H1 (cell line): ENCODE measurements at regions of chr9 and their contacts with region 1.

Region 1: DNA sequence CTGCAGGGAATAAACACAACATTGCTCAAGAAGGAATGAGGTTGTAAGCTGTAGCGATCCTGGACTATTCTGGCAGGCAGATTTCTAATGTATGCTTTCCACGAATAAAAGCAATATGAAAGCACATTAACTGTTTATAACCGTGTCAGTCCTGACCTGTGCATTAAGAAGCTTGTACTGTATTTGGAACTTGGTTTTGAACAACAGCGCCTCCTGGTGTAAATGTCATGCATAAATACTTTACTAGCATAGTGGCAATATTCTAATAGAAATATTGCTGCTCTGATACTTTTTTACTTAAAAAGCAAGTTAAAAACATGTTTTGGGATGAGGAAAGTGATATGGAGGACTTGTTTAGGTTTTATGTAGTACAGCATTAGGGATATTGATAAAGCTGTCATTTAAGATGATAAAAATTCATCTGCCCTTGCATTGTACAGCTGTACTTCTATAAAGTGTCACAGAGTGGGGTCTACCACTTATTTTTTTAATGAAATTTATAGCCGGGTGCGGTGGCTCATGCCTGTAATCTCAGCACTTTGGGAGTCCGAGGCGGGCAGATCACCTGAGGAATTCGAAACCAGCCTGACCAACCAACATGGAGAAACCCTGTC is 70.7 kb upstream of the GNE start:
- DNase-seq: no peak
- H3K4me3 ChIP-seq: no peak overlapping the region
- H3K27ac ChIP-seq: no peak overlapping the region
- H3K4me1 ChIP-seq: no peaks in the 10 kb centered on the region
- H3K27me3 ChIP-seq: no peaks in the 10 kb centered on the region
- CTCF ChIP-seq: peak in 2 of 3 experiments; percentile 51 to 68; a peak in 3 of 4 replicates
- EP300 ChIP-seq: no peak
- POLR2A ChIP-seq: no peak
- RAD21 ChIP-seq: peak; percentile 75 to 78

Region 2: DNA sequence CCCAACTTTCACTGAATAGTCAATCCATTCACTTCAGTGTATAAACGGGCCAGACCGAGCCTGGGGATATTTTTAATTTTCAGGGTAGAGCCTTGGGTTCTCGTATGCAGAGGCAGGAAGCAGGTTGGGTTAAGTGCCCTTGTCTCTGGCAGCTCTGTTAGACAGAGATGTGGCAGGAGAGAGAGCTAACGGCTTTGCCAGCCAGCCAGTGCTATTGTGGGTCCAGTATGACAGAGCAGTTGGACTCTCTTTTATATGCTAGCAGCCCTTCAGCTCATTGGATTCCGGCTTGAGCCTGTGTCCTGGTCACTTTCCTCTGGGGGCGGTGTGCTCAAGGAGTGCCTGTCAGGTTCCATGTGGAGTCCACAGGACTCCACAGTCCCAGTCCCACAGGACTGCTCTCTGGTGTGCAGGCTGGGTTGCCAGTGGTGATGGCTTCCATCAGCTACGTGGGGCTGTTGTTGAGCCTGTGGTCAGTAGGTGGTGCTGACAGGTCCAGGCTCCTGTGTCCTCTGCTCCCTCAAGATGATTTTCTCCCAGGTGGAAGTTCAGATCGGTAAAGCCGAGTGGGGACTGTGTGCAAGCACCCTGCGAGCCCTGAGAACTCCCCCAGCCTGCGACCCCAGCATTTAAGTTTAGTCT is 123.9 kb before region 1 on chr9:
- CTCF ChIA-PET with region 1: interaction called, 33 read pairs
- POLR2A ChIA-PET with region 1: interaction called, 5 read pairs
- DNase-seq: no peak
- H3K4me3 ChIP-seq: no peak overlapping the region
- H3K27ac ChIP-seq: no peak overlapping the region
- H3K4me1 ChIP-seq: no peaks in the 10 kb centered on the region; a peak in 1 of 7 replicates
- H3K27me3 ChIP-seq: no peaks in the 10 kb centered on the region
- CTCF ChIP-seq: peak; percentile 40 to 67 (median 57); a peak in 3 of 4 replicates
- EP300 ChIP-seq: no peak
- POLR2A ChIP-seq: no peak
- RAD21 ChIP-seq: peak; percentile 43 to 62; a peak in 3 of 4 replicates

Region 3: DNA sequence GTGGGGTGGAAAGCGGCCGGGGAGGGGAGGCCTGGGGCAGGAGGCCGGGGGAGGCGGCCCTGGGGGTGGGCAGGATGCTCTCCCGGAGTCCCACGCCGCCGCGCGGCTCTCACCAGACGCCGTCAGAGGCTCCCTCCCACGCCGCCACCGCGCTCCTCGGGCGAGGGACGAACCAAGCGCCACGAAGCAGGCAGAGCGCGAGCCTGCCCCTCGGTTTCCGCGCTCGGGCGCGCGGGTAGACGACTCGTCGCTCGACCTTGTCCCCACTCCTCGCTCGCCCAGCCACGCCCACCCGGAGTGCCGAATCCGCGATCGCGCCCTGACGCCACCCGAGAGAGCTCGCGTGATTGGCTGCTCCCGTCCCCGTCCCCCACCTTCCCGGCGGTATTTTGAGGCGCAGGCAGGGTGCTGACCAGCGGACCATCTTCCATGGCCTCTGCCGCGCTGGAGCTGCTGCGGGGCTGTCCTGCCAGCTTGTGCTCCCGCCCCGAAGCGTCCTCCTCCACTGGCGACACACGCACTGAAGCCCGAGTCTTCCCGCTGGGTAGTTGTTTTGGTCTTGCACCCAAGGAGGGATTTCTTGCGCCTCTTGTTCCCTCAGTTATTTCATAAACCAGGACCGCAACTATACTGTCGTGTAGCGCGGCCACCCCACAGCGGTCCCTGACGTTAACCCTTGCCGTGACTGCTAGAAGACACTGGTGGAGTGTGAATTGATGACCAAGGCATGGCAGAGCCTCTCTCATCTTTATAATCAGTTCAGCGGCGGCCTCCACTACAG is 70.5 kb before region 1 on chr9 and contains the start of gene GNE:
- CTCF ChIA-PET with region 1: interaction called, 12 read pairs
- POLR2A ChIA-PET with region 1: interaction called, 4 read pairs
- DNase-seq: peak; percentile 64 to 97
- H3K4me3 ChIP-seq: peak within 1 kb of the TSS; percentile 68 to 74 (median 72)
- H3K27ac ChIP-seq: no peak within 1 kb of the TSS
- H3K4me1 ChIP-seq: no peaks in the 10 kb centered on the region; a peak in 1 of 7 replicates
- H3K27me3 ChIP-seq: peaks cover 0 to 4% (median 0%) of the 10 kb centered on the region in 4 experiments; a peak in 1 of 7 replicates
- CTCF ChIP-seq: no peak
- EP300 ChIP-seq: no peak
- POLR2A ChIP-seq: peak; percentile 71 to 72
- RAD21 ChIP-seq: no peak; a peak in 1 of 4 replicates
- total RNA-seq, gene GNE: 9.3 and 11.1 TPM in 2 replicates

Region 4: DNA sequence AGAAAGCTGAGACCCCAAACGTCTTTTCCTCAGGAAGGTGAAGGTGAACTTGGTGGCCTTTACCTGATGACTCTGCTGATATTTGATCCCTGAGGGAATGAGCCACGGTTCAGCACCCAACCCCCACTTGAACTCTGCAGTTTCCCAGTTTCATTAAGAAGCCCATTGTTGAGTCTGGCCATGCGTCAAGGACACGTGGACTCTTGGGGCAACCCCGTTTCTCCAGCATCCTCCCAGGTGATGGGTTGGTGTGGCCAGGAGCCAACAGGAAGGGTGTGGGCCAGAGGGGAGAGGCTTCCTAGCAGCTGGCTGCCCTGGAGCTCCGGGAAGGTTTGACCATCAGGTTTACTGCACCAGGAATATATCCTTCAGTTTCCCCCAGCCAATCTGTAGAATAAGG is 11.1 kb before region 1 on chr9:
- CTCF ChIA-PET with region 1: interaction called, 45 read pairs
- POLR2A ChIA-PET with region 1: interaction called, 7 read pairs
- DNase-seq: no peak
- H3K4me3 ChIP-seq: no peak overlapping the region
- H3K27ac ChIP-seq: no peak overlapping the region
- H3K4me1 ChIP-seq: peaks cover 2 to 23% (median 5%) of the 10 kb centered on the region in 4 experiments; a peak in 6 of 7 replicates
- H3K27me3 ChIP-seq: no peaks in the 10 kb centered on the region
- CTCF ChIP-seq: no peak
- EP300 ChIP-seq: no peak
- POLR2A ChIP-seq: no peak
- RAD21 ChIP-seq: no peak